HCT116 (cell line): ENCODE measurements at regions of chrX and their contacts with region 1.

Region 1: DNA sequence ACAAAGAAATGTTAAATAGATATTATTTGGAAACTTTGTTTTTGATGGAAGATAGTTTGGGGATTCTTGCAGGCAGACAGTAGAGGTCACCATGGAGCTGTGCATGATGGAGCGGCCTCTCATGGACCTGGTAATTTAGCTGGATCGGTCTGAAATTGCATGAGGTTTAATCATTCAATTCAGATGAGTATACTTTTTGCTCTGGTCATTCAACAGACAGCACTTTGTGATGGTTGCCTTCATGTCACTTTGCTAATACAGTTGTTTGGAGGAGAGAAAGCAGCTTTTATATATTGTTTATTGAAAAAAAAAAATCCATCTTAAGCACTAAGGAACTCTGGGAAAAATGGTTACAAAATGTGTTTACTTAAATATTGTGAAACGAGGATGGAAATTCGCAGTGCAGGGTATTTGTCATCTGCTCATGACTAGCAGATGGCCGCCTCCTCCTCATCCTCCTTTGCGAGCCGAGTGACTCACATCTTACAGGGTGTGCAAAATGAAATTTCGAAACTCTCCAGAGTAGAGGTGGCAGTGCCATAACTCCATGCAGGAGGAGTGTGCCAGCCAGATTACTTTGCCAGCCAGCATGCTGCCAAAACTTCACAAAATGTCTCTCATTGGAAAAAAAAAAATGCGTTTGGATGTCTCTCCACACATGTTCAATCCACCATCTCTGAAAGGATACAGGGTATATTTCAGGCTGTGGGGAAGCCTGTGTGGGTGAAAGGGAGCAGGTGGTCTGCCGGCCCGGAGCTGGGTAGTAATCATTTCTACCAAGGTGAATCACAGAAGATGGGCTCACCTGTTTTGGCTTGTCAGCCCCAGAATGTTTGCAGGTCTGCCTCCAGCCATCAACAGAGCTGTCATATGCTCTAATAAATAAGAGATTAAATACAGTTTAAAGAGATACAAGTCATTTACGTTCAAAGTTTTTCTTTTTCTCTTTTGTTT is 314.9 kb upstream of the DIPK2B start:
- DNase-seq: peak; percentile 62
- ATAC-seq: peak; percentile 66
- H3K4me3 ChIP-seq: no peak overlapping the region
- H3K27ac ChIP-seq: peak overlapping the region; percentile 91
- H3K4me1 ChIP-seq: peaks cover 32 to 62% of the 10 kb centered on the region in 2 experiments
- H3K27me3 ChIP-seq: no peaks in the 10 kb centered on the region
- CTCF ChIP-seq: peak in 2 of 3 experiments; percentile 55 to 63; a peak in 4 of 6 replicates
- POLR2A ChIP-seq: no peak
- RAD21 ChIP-seq: no peak

Region 2: GRCh38 chrX:45710081-45710801 is 194.7 kb after region 1 on chrX:
- CTCF ChIA-PET with region 1: interaction called, 4 read pairs
- POLR2A ChIA-PET with region 1: interaction called, 11 read pairs
- RAD21 ChIA-PET with region 1: interaction called, 3 read pairs
- intact Hi-C with region 1: loop called (anchors 1 kb)
- DNase-seq: peak; percentile 99
- ATAC-seq: peak; percentile 87
- H3K4me3 ChIP-seq: no peak overlapping the region
- H3K27ac ChIP-seq: peak overlapping the region; percentile 99
- H3K4me1 ChIP-seq: peaks cover 44 to 66% of the 10 kb centered on the region in 2 experiments
- H3K27me3 ChIP-seq: no peaks in the 10 kb centered on the region
- CTCF ChIP-seq: no peak
- POLR2A ChIP-seq: no peak
- RAD21 ChIP-seq: no peak

Region 3: DNA sequence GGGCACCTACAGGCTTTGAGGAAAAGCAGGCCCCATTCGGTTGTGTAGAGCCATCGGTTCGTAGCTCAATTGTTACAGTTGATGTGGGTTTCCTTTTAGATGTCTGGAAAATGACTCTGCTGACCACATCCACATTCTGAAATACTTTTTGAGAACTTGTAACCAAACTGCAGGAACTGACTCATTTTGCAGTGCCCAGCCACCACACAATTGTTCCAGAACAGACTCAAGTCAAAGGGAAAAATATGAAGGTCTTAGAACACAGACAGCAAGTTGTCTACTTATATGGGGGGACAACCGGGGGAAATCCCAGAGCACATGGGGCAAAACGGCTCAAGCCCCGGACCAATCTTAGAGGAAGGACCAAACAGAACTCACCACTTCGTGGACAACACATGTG is 242.8 kb after region 1 on chrX:
- CTCF ChIA-PET with region 1: interaction called, 3 read pairs
- POLR2A ChIA-PET with region 1: no interaction called
- RAD21 ChIA-PET with region 1: no interaction called
- intact Hi-C with region 1: loop called (anchors 5 kb)
- DNase-seq: no peak
- ATAC-seq: peak; percentile 33
- H3K4me3 ChIP-seq: no peak overlapping the region
- H3K27ac ChIP-seq: peak overlapping the region; percentile 94
- H3K4me1 ChIP-seq: peaks cover 86 to 96% of the 10 kb centered on the region in 2 experiments
- H3K27me3 ChIP-seq: no peaks in the 10 kb centered on the region
- CTCF ChIP-seq: no peak
- POLR2A ChIP-seq: no peak
- RAD21 ChIP-seq: no peak

Region 4: DNA sequence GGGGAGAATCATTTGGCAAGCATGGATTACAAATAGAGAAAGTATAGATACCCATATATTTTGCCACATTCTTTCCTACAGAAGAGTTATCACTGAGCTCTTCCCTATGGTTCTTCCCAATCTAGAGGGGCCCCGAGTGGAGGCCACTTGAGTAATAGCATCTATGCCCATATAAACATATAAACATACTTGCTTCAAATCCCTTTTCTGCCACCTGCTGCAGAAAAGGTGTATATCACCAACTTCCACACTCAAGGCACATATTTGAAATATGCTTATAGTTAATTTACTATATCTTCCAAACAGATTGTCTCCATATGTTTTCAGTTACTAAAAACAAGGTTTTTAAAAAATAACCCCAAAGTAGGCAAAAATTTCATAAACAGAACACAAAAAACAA is 328.0 kb after region 1 on chrX:
- CTCF ChIA-PET with region 1: no interaction called
- POLR2A ChIA-PET with region 1: no interaction called
- RAD21 ChIA-PET with region 1: no interaction called
- intact Hi-C with region 1: loop called (anchors 5 kb)
- DNase-seq: no peak
- ATAC-seq: no peak
- H3K4me3 ChIP-seq: no peak overlapping the region
- H3K27ac ChIP-seq: peak overlapping the region; percentile 40
- H3K4me1 ChIP-seq: peaks cover 34 to 80% of the 10 kb centered on the region in 2 experiments
- H3K27me3 ChIP-seq: no peaks in the 10 kb centered on the region
- CTCF ChIP-seq: no peak; a peak in 1 of 6 replicates
- POLR2A ChIP-seq: no peak
- RAD21 ChIP-seq: no peak